ENCODE measurements at regions of chr19 and their contacts with region 1.

Region 1: DNA sequence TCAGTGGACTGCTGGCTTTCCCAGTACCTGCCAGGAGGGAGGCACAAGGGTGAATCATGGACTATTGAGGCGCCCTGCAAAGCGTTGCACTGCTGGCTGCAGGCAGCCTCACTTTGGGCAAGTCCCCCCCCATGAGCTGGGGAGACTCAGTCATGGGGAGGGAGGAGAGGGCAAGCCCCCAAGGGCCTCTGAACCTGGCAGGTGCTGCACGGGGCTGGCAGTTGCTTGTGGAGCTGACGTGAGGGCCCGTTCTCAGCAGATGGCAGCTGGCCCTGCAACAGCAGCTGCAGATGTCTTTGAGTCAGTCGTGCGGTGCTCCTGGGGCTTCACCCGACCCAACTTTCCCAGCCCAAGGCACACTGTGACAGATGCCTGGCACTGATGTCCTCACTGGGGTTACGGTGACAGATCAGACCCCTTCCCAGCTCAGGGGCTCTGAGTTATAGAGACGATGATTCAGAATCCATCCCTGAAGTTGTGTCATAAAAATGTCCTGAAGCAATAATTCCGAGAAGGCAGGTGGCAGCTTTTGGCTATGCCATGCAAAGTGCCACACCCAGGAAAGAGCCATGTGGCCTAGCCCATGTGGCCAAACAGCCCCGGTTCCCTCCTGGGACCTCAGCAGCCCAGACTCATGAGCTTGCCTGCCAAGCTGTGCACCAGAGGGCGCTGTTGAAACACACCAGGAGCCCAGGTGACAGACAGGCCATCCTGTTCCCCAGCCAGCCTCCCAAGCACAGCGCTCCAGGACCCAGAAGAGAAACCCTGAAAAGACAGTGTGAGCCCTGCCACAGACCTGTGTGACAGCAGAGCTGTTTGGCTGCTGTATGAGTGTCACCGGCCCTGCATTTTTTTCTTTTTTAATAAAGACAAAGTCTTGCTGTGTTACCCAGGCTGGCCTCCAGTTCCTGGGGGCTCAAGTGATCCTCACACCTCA is 53.6 kb upstream of the LDLR start:
- DNase-seq: no peak
- H3K4me3 ChIP-seq: no peak overlapping the region
- H3K27ac ChIP-seq: peak overlapping the region; percentile 68
- H3K4me1 ChIP-seq: peaks cover 5% of the 10 kb centered on the region
- H3K27me3 ChIP-seq: no peaks in the 10 kb centered on the region
- CTCF ChIP-seq: peak; percentile 87 to 94 (median 87)
- POLR2A ChIP-seq: no peak

Region 2: GRCh38 chr19:11130824-11131455 is 95.2 kb after region 1 on chr19:
- intact Hi-C with region 1: loop called (anchors 5 kb)
- DNase-seq: no peak
- H3K4me3 ChIP-seq: no peak overlapping the region
- H3K27ac ChIP-seq: peak overlapping the region; percentile 61
- H3K4me1 ChIP-seq: peaks cover 4% of the 10 kb centered on the region
- H3K27me3 ChIP-seq: no peaks in the 10 kb centered on the region
- CTCF ChIP-seq: peak; percentile 59 to 87 (median 76)
- POLR2A ChIP-seq: no peak

Region 3: GRCh38 chr19:11203194-11204075 is 167.7 kb after region 1 on chr19:
- intact Hi-C with region 1: loop called (anchors 10 kb)
- DNase-seq: peak in 1 of 2 donors; percentile 97
- H3K4me3 ChIP-seq: no peak overlapping the region
- H3K27ac ChIP-seq: peak overlapping the region; percentile 95
- H3K4me1 ChIP-seq: peaks cover 42% of the 10 kb centered on the region
- H3K27me3 ChIP-seq: no peaks in the 10 kb centered on the region
- CTCF ChIP-seq: peak; percentile 64 to 88 (median 81)
- POLR2A ChIP-seq: no peak

Region 4: DNA sequence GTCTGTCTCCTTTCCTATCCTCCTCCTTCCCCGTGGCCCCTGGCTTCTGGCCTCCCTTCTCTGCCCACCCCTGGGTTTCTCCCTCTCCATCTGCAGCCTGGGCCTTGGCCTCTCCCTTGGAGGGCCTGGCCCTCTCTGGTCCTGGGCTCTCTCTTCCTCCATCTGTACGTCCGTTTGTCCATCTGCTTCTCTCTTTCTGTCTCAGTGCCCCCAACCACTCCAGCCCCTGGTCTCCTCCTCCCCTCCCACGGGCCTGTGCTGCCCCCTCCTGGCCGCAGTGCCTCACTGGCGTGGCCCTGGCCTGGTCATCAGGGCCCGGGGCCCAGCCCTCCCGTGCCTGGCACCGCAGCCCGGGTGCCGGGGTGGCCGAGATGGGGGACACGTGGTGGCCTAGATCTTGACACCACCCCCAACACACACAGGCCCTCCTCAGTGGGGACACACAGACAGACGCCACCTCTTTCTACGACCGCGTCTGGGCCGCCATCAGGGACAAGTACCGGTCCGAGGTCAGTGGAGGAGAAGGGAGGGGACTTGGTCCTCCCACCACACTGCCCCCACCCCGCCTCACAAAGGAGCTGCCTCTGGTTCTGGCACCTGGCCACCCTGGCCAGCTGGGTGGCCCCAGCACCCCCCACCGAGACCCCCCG is 411.1 kb after region 1 on chr19:
- intact Hi-C with region 1: loop called (anchors 10 kb)
- DNase-seq: no peak
- H3K4me3 ChIP-seq: no peak overlapping the region
- H3K27ac ChIP-seq: no peak overlapping the region
- H3K4me1 ChIP-seq: no peaks in the 10 kb centered on the region
- H3K27me3 ChIP-seq: no peaks in the 10 kb centered on the region
- CTCF ChIP-seq: peak; percentile 46 to 72 (median 67)
- POLR2A ChIP-seq: no peak

Measured in vagina (tissue), 2 donors.